Gastrocnemius medialis (tissue), 4 donors: ENCODE measurements at regions of chr4 and their contacts with region 1.

Region 1: GRCh38 chr4:82561745-82562515 is at the start of gene TMEM150C:
- DNase-seq: no peak
- ATAC-seq: peak; percentile 49 to 69
- H3K4me3 ChIP-seq: peak within 1 kb of the TSS; percentile 61 to 76 (median 67)
- H3K27ac ChIP-seq: peak within 1 kb of the TSS; percentile 51 to 61 (median 56)
- H3K4me1 ChIP-seq: peaks cover 0 to 9% of the 10 kb centered on the region in 2 donors
- H3K27me3 ChIP-seq: no peaks in the 10 kb centered on the region
- CTCF ChIP-seq: peak in 1 of 5 experiments; percentile 29
- POLR2A ChIP-seq: no peak
- total RNA-seq, gene TMEM150C: 5.5 to 13.5 (median 7.8) TPM

Region 2: DNA sequence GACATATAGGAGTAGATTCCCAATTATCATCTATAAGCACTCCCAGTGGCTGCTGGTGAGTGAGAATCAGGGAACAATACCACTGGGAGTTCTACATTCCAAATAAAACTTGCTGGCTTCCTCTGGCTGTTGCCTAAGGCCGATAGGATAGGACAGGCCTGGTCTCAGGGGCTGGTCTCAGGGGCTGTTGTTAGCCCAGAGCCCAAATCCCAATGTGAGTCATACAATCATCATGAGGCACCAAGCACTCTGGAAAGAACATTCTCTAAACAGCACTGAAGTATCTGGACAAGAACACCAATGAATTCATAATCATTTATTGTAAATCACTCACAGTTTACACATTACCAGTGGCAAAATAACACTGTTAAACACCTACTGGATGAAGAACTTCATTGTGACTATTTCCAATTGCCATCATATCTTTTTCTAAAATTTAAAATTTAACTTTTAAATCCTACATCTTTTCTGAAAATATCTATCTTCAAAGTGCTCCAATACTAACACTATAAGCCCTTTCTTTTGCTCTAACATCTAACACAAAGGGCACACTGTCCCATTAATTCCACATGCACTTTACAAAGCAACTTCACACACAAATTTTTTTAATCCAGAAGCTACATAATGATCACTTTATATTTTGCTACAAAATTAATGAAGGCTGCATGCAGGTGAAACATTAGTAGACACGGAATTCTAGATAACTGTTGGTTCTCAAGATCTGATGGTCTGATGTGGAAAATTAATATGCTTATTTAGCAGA is 67.5 kb after region 1 on chr4:
- in situ Hi-C with region 1: no loop called
- intact Hi-C with region 1: loop called (anchors 5 kb)
- DNase-seq: no peak
- ATAC-seq: no peak
- H3K4me3 ChIP-seq: no peak overlapping the region
- H3K27ac ChIP-seq: no peak overlapping the region
- H3K4me1 ChIP-seq: no peaks in the 10 kb centered on the region
- H3K27me3 ChIP-seq: no peaks in the 10 kb centered on the region
- CTCF ChIP-seq: no peak
- POLR2A ChIP-seq: no peak

Region 3: DNA sequence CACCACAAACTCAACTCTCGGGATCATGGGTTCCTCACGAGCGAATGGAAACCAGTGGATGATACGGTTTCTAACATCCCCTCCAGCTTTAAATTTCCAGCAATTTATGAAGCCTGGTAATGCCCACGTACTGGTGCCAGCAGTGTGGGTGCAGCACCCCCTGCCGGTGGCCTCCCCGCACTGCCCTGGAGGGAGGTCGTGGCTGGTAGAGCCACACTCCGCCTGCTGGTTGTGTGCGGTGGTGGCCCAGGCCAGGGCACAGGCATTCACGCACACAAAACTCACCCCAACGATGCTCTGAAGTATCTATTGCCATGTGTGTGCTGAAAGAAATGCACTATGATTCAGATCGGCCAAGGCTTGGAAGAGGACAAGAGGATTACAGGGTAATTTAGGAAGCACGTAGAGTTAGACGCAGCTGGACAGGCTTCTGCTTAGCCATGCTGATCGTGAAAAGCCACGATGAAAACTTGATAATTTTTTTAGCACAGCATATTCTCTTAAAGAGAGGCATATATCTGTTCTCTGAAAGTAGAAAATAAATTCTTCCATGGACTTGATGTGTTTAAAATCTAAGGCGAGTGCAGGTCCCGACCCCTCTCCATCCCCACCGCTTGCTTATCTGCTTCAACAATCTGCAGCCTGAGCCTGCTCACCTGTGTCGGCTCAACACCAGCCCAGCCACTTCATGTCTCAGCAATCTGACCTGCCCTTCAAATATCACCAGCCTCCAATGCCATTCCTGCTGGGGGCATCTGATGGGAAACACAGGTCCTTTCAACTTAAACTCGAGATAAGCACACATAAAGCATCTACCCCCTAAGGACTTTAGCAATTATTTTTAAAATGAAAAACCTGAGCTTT is 177.6 kb after region 1 on chr4:
- in situ Hi-C with region 1: no loop called
- intact Hi-C with region 1: no loop called
- DNase-seq: peak in 1 of 2 donors; percentile 50
- ATAC-seq: peak; percentile 45 to 66
- H3K4me3 ChIP-seq: no peak overlapping the region
- H3K27ac ChIP-seq: no peak overlapping the region
- H3K4me1 ChIP-seq: no peaks in the 10 kb centered on the region
- H3K27me3 ChIP-seq: no peaks in the 10 kb centered on the region
- CTCF ChIP-seq: peak; percentile 77 to 82 (median 79)
- POLR2A ChIP-seq: no peak

Region 4: GRCh38 chr4:83348074-83348473 is 786.1 kb after region 1 on chr4:
- in situ Hi-C with region 1: no loop called
- intact Hi-C with region 1: no loop called
- DNase-seq: no peak
- ATAC-seq: no peak
- H3K4me3 ChIP-seq: no peak overlapping the region
- H3K27ac ChIP-seq: no peak overlapping the region
- H3K4me1 ChIP-seq: no peaks in the 10 kb centered on the region
- H3K27me3 ChIP-seq: no peaks in the 10 kb centered on the region
- CTCF ChIP-seq: no peak
- POLR2A ChIP-seq: no peak